ENCODE measurements at regions of chr3 and their contacts with region 1.

Region 1: GRCh38 chr3:4493014-4493940 is at the start of gene ITPR1:
- DNase-seq: peak; percentile 88 to 97
- H3K4me3 ChIP-seq: peak within 1 kb of the TSS; percentile 75
- H3K27ac ChIP-seq: no peak within 1 kb of the TSS
- H3K4me1 ChIP-seq: peaks cover 4% of the 10 kb centered on the region; the same call in 1 of the 2 replicates
- H3K27me3 ChIP-seq: no peaks in the 10 kb centered on the region
- CTCF ChIP-seq: no peak
- total RNA-seq, gene ITPR1: 10.4 and 11.3 TPM in 2 replicates

Region 2: DNA sequence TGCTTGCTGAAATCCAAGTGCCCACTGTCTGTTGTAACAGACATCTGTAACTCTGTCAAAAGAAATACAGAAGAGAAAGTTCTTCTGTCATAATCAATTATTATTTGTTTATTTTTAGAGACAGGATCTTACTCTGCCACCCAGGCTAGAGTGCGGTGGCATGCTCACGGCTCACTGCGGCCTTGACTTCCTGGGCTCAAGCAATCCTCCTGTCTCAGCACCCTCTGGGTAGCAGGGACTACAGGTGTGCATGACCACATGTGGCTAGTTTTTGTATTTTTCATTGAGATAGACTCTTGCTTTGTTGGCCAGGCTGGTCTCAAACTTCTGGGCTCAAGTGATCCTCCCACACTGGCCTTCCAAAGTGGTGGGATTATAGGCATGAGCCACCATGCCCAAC is 367.7 kb before region 1 on chr3:
- CTCF ChIA-PET with region 1: no interaction called
- POLR2A ChIA-PET with region 1: no interaction called
- intact Hi-C with region 1: no loop called
- DNase-seq: no peak
- H3K4me3 ChIP-seq: no peak overlapping the region
- H3K27ac ChIP-seq: no peak overlapping the region
- H3K4me1 ChIP-seq: no peaks in the 10 kb centered on the region
- H3K27me3 ChIP-seq: no peaks in the 10 kb centered on the region
- CTCF ChIP-seq: no peak

Region 3: DNA sequence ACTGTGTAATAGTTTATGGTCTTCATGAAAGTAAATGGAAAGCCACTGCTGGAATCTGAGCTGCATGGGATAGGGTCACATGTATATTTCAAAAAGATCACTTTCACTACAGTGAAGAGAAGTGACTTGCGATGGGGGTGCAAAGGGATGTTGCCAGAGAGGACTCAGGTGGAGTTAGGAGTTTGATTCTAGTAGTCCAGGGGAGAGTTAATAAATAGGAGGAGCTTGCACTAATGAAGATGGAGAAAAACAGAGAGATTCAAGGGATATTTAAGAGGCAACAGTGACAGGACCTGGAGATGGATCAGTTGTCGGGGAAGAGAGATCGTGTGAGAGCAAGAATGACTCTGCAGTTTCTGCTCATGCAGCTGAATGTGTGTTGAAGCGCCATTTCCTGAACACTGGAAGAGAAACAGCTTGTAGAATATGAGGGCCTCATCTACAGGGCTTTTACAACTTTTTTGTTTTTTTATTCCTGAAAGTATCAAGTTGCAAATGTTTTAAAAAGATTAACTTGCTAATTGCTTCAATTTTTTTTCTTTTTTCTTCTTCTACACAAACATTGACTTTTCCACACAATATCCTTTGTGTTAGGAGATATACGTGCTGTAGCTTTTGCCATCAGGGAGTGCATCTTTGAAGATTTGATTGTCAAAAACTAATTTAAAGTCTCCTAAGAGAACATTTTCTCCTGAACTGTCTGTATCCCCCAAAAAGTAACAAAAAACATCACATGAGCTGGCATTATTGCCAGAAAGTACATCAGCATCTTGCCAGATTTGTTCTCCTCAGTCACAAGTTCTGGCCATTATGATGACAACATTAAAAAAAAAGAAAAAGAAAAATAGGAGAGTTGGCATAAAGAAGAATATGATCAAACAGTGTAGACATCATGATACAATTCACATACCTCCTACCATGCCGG is 152.6 kb before region 1 on chr3:
- CTCF ChIA-PET with region 1: no interaction called
- POLR2A ChIA-PET with region 1: no interaction called
- intact Hi-C with region 1: no loop called
- DNase-seq: no peak
- H3K4me3 ChIP-seq: no peak overlapping the region
- H3K27ac ChIP-seq: no peak overlapping the region
- H3K4me1 ChIP-seq: no peaks in the 10 kb centered on the region
- H3K27me3 ChIP-seq: no peaks in the 10 kb centered on the region
- CTCF ChIP-seq: no peak

Region 4: GRCh38 chr3:4416961-4417360 is 76.3 kb before region 1 on chr3:
- CTCF ChIA-PET with region 1: no interaction called
- POLR2A ChIA-PET with region 1: interaction called, 11 read pairs
- intact Hi-C with region 1: loop called (anchors 5 kb)
- DNase-seq: peak; percentile 87 to 93
- H3K4me3 ChIP-seq: no peak overlapping the region
- H3K27ac ChIP-seq: peak overlapping the region; percentile 44; the same call in 1 of the 2 replicates
- H3K4me1 ChIP-seq: peaks cover 30% of the 10 kb centered on the region
- H3K27me3 ChIP-seq: no peaks in the 10 kb centered on the region
- CTCF ChIP-seq: no peak

Region 5: GRCh38 chr3:4466741-4467521 is 26.3 kb before region 1 on chr3 and contains the start of gene SUMF1:
- CTCF ChIA-PET with region 1: no interaction called
- POLR2A ChIA-PET with region 1: interaction called, 13 read pairs
- intact Hi-C with region 1: loop called (anchors 1 kb)
- DNase-seq: peak; percentile 54 to 67
- H3K4me3 ChIP-seq: peak within 1 kb of the TSS; percentile 68
- H3K27ac ChIP-seq: peak within 1 kb of the TSS; percentile 84
- H3K4me1 ChIP-seq: 0 out of 2 replicates have a peak, but pooled peaks cover 4% of the 10 kb centered on the region
- H3K27me3 ChIP-seq: no peaks in the 10 kb centered on the region
- CTCF ChIP-seq: no peak
- total RNA-seq, gene SUMF1: 41.6 and 50.9 TPM in 2 replicates

Region 6: GRCh38 chr3:4571690-4572334 is 78.5 kb after region 1 on chr3:
- CTCF ChIA-PET with region 1: no interaction called
- POLR2A ChIA-PET with region 1: interaction called, 5 read pairs
- intact Hi-C with region 1: loop called (anchors 2 kb)
- DNase-seq: no peak
- H3K4me3 ChIP-seq: no peak overlapping the region
- H3K27ac ChIP-seq: no peak overlapping the region
- H3K4me1 ChIP-seq: peaks cover 5% of the 10 kb centered on the region
- H3K27me3 ChIP-seq: no peaks in the 10 kb centered on the region
- CTCF ChIP-seq: no peak